ENCODE measurements at regions of chr16 and their contacts with region 1.

Region 1: GRCh38 chr16:24753437-24753836 is 24.0 kb downstream of the TNRC6A start:
- DNase-seq: no peak
- ATAC-seq: no peak
- H3K4me3 ChIP-seq: no peak overlapping the region
- H3K4me3 Mint-ChIP-seq: no peak overlapping the region
- H3K27ac ChIP-seq: no peak overlapping the region
- H3K27ac Mint-ChIP-seq: no peak overlapping the region
- H3K4me1 ChIP-seq: peaks cover 8 to 16% of the 10 kb centered on the region in 2 donors
- H3K4me1 Mint-ChIP-seq: peaks cover 53% of the 10 kb centered on the region
- H3K27me3 ChIP-seq: no peaks in the 10 kb centered on the region
- H3K27me3 Mint-ChIP-seq: no peaks in the 10 kb centered on the region
- CTCF ChIP-seq: no peak

Region 2: GRCh38 chr16:24737391-24737871 is 16.0 kb before region 1 on chr16:
- CTCF ChIA-PET with region 1: no interaction called
- POLR2A ChIA-PET with region 1: no interaction called
- intact Hi-C with region 1: loop called (anchors 2 kb)
- DNase-seq: no peak
- ATAC-seq: no peak
- H3K4me3 ChIP-seq: no peak overlapping the region
- H3K4me3 Mint-ChIP-seq: no peak overlapping the region
- H3K27ac ChIP-seq: peak overlapping the region in 1 of 2 donors; percentile 52
- H3K27ac Mint-ChIP-seq: peak overlapping the region; percentile 23
- H3K4me1 ChIP-seq: peaks cover 34 to 40% of the 10 kb centered on the region in 2 donors
- H3K4me1 Mint-ChIP-seq: peaks cover 71% of the 10 kb centered on the region
- H3K27me3 ChIP-seq: no peaks in the 10 kb centered on the region
- H3K27me3 Mint-ChIP-seq: no peaks in the 10 kb centered on the region
- CTCF ChIP-seq: no peak

Measured in B cell (primary cell).